Gastrocnemius medialis (tissue), 4 donors: ENCODE measurements at regions of chr7 and their contacts with region 1.

Region 1: DNA sequence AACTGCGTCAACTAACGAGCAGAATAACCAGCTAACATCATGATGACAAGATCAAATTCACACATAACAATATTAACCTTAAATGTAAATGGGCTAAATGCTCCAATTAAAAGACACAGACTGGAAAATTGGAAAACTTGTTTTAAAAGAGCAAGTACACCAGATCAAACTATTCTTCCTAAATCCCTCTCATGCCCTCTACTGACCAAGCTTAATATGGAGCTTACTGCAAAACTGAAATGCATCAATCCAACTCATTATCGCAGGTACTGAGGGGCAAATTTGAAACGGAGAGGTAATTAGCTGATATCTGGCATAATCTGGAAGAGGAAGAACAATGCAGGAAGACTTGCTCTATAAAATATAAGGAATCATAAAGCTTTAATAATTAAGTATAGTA is 1223.8 kb downstream of the NXPH1 start:
- DNase-seq: no peak
- ATAC-seq: no peak
- H3K4me3 ChIP-seq: no peak overlapping the region
- H3K27ac ChIP-seq: no peak overlapping the region
- H3K4me1 ChIP-seq: no peaks in the 10 kb centered on the region
- H3K27me3 ChIP-seq: no peaks in the 10 kb centered on the region
- CTCF ChIP-seq: no peak
- POLR2A ChIP-seq: no peak

Region 2: GRCh38 chr7:9557853-9558252 is 99.4 kb before region 1 on chr7:
- in situ Hi-C with region 1: loop called in 1 of 4 experiments (anchors 25 kb)
- intact Hi-C with region 1: no loop called
- DNase-seq: no peak
- ATAC-seq: no peak
- H3K4me3 ChIP-seq: no peak overlapping the region
- H3K27ac ChIP-seq: no peak overlapping the region
- H3K4me1 ChIP-seq: no peaks in the 10 kb centered on the region
- H3K27me3 ChIP-seq: no peaks in the 10 kb centered on the region
- CTCF ChIP-seq: no peak
- POLR2A ChIP-seq: no peak